ENCODE measurements at regions of chr19 and their contacts with region 1.

Region 1: DNA sequence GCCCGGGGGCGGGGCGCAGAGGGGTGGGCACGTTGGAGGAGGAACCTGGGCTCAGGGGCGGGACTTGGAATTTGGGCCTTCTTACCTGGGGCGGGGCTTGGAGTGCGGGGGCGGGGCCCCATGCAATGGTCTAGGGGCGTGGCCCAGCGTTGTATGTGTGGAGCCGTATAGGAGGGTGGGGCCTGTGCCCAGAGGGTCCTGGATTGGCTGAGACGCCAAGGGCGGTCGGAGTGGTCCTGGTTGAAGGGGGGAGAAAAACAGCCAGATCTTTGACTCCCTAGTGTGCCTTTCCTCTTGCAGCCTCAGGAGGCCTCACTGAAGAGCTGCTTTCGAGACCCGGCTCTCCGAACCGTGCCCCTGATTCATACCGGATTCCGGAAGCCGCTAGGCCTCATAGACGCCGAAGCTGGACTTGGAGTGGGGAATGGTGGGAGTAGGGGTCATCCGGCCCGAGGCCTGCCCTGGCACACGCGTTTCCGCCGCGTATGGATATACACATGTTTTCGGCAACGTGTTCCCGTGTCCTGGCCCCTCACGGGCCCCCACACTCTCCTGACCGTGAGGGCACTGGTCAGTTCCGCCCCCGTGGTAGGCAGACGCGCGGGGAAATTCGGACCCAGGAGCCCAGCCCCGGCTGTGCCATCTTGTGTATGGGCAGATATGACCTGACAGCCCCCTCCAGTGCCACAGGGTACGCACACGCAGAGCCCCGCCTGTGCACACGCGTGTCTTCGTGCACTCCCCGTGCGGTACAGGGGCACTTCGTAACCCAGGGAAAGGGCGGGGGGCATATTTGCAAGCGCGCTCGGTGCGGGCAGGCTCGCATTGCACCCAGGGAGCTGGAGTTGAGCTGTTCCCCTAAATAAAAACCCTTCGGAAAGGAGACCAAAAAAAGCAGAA is 661 bp upstream of the PRR12 start:
- DNase-seq: peak; percentile 99
- H3K4me3 ChIP-seq: peak overlapping the region; percentile 80
- H3K27ac ChIP-seq: peak overlapping the region; percentile 97
- H3K4me1 ChIP-seq: peaks cover 7% of the 10 kb centered on the region
- H3K27me3 ChIP-seq: no peaks in the 10 kb centered on the region
- CTCF ChIP-seq: no peak

Region 2: GRCh38 chr19:49361438-49362047 is 228.8 kb before region 1 on chr19:
- CTCF ChIA-PET with region 1: no interaction called
- POLR2A ChIA-PET with region 1: interaction called, 11 read pairs
- intact Hi-C with region 1: no loop called
- DNase-seq: peak; percentile 88
- H3K4me3 ChIP-seq: peak overlapping the region; percentile 84
- H3K27ac ChIP-seq: peak overlapping the region; percentile 98
- H3K4me1 ChIP-seq: peaks cover 13% of the 10 kb centered on the region
- H3K27me3 ChIP-seq: no peaks in the 10 kb centered on the region
- CTCF ChIP-seq: no peak

Region 3: GRCh38 chr19:49497047-49497788 is 93.1 kb before region 1 on chr19:
- CTCF ChIA-PET with region 1: interaction called, 5 read pairs
- POLR2A ChIA-PET with region 1: interaction called, 10 read pairs
- intact Hi-C with region 1: no loop called
- DNase-seq: peak; percentile 87
- H3K4me3 ChIP-seq: peak overlapping the region; percentile 82
- H3K27ac ChIP-seq: peak overlapping the region; percentile 99
- H3K4me1 ChIP-seq: peaks cover 33% of the 10 kb centered on the region
- H3K27me3 ChIP-seq: no peaks in the 10 kb centered on the region
- CTCF ChIP-seq: no peak

Region 4: DNA sequence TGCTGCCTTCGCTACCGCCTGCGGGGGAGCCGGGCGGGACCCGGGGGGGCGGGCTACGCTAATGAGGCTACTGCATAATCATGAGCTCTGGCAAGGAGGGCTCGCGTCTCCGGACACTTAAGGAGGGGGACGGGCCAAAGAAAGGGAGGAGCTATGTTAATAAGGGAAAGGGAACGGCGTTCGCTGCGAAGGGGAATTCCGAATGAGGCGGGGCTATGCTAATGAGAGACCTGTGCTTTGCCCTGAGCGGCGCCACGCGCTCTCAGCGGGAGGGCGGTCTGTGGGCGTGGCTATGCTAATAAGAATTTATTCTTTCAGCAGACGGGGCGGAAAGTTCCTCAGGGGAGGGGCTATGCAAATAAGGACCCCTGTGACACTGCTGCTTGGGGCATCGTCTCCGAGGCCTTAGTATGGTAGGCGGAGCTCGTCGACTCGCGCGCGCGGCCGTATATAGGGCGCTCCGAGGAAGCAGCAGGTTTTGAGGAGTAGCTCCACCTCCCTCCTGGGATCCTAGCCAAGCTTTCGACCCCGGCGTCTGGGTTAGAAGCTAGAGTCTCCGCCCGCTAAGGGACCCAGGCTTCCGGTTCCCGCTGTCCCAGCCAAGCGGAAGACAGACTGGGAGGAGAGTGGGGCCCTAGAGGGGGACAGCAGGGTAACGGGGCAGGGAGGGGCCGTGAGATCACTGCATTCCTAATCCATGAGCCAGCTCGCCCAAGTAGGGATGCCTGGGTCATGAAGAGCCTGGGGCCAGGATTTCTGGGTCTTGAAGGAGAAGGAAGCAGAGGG is 50.0 kb after region 1 on chr19 and contains the start of gene RRAS:
- CTCF ChIA-PET with region 1: interaction called, 3 read pairs
- POLR2A ChIA-PET with region 1: interaction called, 5 read pairs
- intact Hi-C with region 1: loop called (anchors 2 kb)
- DNase-seq: peak; percentile 100
- H3K4me3 ChIP-seq: peak within 1 kb of the TSS; percentile 59
- H3K27ac ChIP-seq: peak within 1 kb of the TSS; percentile 98
- H3K4me1 ChIP-seq: peaks cover 40% of the 10 kb centered on the region
- H3K27me3 ChIP-seq: no peaks in the 10 kb centered on the region
- CTCF ChIP-seq: no peak
- total RNA-seq, gene RRAS: 27.6 and 32.4 TPM in 2 replicates

Region 5: DNA sequence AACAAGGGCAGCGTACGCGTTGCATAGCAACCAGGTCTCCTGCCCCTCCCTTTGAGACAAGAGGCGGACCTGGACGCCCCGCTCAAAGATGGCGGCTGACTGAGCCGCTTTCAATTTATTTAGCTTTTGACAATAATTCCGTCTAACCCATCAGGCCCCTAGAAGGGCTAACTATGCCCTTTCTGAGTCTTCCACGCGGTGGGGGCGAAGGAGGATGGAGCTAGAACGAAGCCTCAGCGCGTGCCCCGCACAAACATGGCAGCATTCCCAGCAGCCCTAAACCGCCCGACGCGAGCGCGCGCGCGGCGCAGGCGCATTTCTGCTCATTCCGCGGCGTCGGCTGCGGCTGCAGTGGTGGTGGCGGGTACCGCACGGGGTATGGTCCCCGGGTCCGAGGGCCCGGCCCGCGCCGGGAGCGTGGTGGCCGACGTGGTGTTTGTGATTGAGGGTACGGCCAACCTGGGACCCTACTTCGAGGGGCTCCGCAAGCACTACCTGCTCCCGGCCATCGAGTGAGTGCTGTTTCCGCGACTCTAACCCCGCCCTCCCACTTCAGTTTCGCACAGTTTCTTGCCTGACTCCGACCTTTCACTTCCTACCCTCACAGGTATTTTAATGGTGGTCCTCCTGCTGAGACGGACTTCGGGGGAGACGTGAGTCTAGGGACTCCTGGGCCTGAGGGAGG is 227.8 kb after region 1 on chr19 and contains the start of gene MED25:
- CTCF ChIA-PET with region 1: no interaction called
- POLR2A ChIA-PET with region 1: no interaction called
- intact Hi-C with region 1: loop called (anchors 5 kb)
- DNase-seq: peak; percentile 91
- H3K4me3 ChIP-seq: peak within 1 kb of the TSS; percentile 88
- H3K27ac ChIP-seq: peak within 1 kb of the TSS; percentile 93
- H3K4me1 ChIP-seq: peaks cover 12% of the 10 kb centered on the region
- H3K27me3 ChIP-seq: no peaks in the 10 kb centered on the region
- CTCF ChIP-seq: 0 out of 2 replicates have a peak, but pooled peaks have one; percentile 10
- total RNA-seq, gene MED25: 93.0 and 111 TPM in 2 replicates

Measured in A673 (cell line).